Cardiac septum (tissue), 1 donor: ENCODE measurements at regions of chr22 and their contacts with region 1.

Region 1: DNA sequence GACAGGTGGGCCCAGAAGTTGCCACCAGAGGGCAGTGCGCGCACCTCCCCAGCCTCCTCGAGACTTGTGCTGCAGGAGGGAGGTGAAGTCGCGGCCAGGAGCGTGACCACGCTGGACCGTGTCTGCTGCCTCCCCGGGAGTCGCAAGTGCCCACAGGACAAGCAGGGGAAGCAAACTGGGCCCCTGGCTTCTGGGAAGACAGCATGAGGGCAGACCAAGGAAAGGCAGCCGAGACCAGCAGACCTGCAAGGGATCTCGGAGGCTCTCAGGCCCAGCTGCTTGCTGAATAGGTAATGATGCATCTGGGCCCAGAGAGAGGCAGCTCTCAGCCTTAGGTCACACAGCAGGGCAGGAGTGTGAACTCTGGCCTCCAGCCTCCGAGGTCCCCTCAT is 17.0 kb upstream of the IL2RB start:
- DNase-seq: peak; percentile 93

Region 2: DNA sequence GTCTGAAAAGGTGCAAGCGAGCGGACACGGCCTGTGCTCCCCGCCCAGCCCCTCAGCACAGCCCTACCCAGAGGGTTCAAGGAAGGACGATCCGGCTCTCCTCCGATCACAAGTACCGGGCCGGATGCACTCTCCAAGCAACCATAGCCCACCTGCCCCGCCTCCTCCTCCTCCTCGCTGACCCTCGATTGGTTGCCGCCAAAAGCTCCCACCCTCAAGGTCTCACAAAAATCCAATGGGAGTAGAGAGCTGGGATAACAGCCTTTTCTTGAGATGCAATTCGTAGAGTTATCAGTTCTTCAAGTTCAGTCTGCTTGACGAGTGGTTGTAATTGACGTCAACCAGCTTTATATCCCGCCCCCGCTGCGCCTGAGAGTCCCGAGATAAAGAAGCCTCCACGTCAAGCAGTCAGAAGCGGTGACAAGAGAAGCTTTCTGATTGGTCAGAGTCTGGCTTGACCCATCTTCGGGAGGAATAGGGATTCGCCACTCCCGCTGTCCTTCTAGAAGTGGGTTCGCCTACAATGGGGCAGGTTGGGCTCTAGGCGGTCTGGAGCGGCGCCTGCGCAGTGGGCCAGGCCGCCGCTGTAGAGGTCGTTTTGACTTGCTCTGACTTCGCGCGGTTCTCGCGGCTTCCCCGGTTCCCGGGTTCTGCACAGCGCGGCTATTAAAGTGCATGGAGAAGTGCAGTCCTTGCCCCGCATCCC is 390.6 kb before region 1 on chr22 and contains the start of gene IFT27:
- intact Hi-C with region 1: loop called (anchors 10 kb)
- DNase-seq: peak; percentile 98
- total RNA-seq, gene IFT27: 24.7 TPM

Region 3: GRCh38 chr22:37077884-37078485 is 88.7 kb before region 1 on chr22:
- intact Hi-C with region 1: loop called (anchors 5 kb)
- DNase-seq: no peak

Region 4: DNA sequence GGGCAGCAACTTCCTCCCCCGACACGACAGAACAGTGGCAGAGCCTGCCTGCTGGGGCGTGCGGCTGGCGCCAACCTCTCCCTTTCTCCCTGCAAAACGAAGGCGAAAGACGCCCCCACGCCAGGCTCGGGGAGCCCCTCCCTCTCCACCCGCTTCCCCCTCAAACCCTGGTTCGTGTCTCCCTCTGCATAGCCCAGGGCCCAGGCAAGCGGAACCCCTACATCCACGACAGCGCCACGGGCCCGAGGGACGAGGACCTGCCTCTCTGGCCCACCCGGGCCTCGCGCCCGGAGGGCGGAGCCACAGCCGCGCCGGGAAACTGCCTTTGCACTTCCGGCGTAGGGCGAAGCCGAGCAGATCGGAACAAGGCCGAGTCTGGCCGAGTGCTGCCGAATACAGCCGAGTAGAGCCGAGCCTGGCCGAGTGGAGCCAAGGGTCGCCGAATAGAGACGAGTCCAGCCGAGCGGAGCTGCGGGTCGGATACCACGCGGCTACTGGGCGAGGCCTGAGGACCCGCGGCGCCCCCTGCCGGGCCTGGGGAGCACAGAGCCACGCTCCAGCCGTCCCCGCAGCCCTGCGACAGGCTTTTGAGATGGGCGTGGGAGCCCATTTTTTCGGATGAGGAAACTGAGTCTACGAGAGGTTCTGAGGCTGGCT is 32.6 kb after region 1 on chr22:
- intact Hi-C with region 1: loop called (anchors 1 kb)
- DNase-seq: peak; percentile 99

Region 5: DNA sequence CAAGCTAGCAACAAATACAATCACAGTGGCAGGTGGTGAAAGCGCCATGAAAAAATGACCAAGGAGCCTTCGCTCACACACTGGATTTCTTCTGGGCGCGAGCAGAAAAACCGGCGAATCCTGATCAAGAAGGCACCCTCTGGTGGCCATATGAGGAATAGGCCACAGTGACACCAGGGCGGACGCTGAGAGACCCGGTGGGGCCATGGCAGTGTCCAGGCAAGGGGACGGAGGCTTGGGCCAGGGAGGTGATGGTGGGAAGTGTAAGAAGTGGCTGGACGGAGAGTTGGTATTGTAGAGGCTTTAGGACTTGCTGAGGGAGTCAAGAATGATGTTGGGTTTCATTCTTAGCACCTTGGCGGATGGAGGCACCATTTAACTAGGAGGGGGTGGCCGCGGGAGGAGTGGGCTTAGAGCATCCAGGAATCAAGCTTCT is 94.2 kb after region 1 on chr22:
- intact Hi-C with region 1: loop called (anchors 2 kb)
- DNase-seq: no peak